Endothelial cell of umbilical vein (primary cell): ENCODE measurements at regions of chr6 and their contacts with region 1.

Region 1: GRCh38 chr6:106325336-106326178 is at the start of gene ATG5:
- DNase-seq: peak; percentile 99
- H3K4me3 ChIP-seq: peak within 1 kb of the TSS; percentile 81 to 93 (median 84)
- H3K27ac ChIP-seq: peak within 1 kb of the TSS; percentile 77
- H3K4me1 ChIP-seq: peaks cover 6% of the 10 kb centered on the region
- H3K27me3 ChIP-seq: peaks cover 2 to 13% of the 10 kb centered on the region in 2 experiments
- CTCF ChIP-seq: no peak
- POLR2A ChIP-seq: peak; percentile 79
- total RNA-seq, gene ATG5: 32.8 and 35.9 TPM in 2 replicates

Region 2: GRCh38 chr6:105851113-105851580 is 474.4 kb before region 1 on chr6:
- CTCF ChIA-PET with region 1: no interaction called
- POLR2A ChIA-PET with region 1: no interaction called
- dilution Hi-C with region 1: no loop called
- intact Hi-C with region 1: no loop called
- DNase-seq: no peak
- H3K4me3 ChIP-seq: no peak overlapping the region
- H3K27ac ChIP-seq: no peak overlapping the region
- H3K4me1 ChIP-seq: no peaks in the 10 kb centered on the region
- H3K27me3 ChIP-seq: no peaks in the 10 kb centered on the region
- CTCF ChIP-seq: no peak
- POLR2A ChIP-seq: no peak

Region 3: DNA sequence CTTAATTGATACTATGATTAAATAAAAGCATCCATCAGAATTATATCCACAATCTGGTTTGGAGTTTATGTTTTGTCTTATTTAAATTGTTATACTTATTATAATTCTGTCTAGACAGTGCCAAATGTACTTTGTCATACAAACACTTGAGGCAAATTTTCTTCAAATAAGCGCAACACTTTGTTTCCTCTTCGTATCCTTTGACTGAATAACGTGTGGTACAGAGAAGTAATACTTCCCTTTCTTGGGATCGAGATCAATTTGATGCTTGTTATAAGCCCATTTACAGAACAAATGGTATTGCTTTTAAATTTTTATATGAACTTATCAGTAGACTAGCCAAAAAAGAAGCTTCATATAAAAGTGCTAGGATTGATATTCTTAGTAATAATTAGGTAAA is 111.0 kb before region 1 on chr6:
- CTCF ChIA-PET with region 1: no interaction called
- POLR2A ChIA-PET with region 1: no interaction called
- dilution Hi-C with region 1: no loop called
- intact Hi-C with region 1: no loop called
- DNase-seq: no peak
- H3K4me3 ChIP-seq: no peak overlapping the region
- H3K27ac ChIP-seq: no peak overlapping the region
- H3K4me1 ChIP-seq: no peaks in the 10 kb centered on the region
- H3K27me3 ChIP-seq: no peaks in the 10 kb centered on the region
- CTCF ChIP-seq: no peak
- POLR2A ChIP-seq: no peak

Region 4: GRCh38 chr6:106309766-106310373 is 15.7 kb before region 1 on chr6:
- CTCF ChIA-PET with region 1: interaction called, 3 read pairs
- POLR2A ChIA-PET with region 1: no interaction called
- dilution Hi-C with region 1: no loop called
- intact Hi-C with region 1: loop called (anchors 1 kb)
- DNase-seq: peak; percentile 34
- H3K4me3 ChIP-seq: no peak overlapping the region
- H3K27ac ChIP-seq: peak overlapping the region; percentile 0
- H3K4me1 ChIP-seq: peaks cover 26% of the 10 kb centered on the region
- H3K27me3 ChIP-seq: no peaks in the 10 kb centered on the region
- CTCF ChIP-seq: no peak
- POLR2A ChIP-seq: no peak